ENCODE measurements at regions of chr5 and their contacts with region 1.

Region 1: DNA sequence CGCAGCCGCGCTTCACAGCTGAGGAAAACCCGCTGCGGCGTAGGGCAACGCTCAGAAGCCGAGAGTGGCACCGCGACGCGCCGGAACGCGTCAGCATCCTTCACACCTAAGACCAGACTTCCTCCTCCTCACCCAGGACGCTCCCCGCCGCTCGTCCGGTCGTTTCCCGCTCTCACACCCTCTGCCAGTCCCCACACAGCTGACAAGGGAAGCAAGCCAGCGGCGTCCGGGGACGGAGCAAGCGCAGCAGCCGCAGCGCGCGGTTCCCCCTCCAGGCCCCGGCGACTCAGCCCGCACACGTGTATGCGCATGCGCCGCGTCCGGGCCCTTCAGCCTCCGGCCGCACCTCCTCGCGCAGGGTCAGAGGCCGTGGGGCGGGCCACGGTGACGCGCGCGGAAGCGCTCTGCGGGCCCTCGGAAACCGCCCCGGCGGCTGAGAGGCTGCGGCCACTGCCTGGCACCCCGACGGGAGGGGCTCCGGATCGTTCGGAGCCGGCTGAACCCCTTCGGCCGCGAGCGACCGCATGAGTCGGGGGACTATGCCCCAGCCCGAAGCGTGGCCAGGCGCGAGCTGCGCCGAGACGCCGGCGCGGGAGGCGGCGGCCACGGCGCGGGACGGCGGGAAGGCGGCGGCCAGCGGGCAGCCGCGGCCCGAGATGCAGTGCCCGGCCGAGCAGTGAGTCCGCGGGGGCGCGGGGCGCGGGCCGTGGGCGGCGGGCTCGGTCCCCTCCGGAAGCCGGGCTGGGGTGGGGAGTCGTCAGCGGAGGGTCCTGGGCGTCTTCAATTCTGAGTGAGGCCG is at the start of gene OTULIN:
- DNase-seq: peak; percentile 94
- ATAC-seq: peak; percentile 81
- H3K4me3 ChIP-seq: peak within 1 kb of the TSS; percentile 75 to 91 (median 79)
- H3K4me3 Mint-ChIP-seq: peak within 1 kb of the TSS; percentile 99
- H3K27ac ChIP-seq: peak within 1 kb of the TSS; percentile 67 to 89
- H3K27ac Mint-ChIP-seq: peak within 1 kb of the TSS; percentile 99
- H3K4me1 ChIP-seq: peaks cover 48 to 60% of the 10 kb centered on the region in 2 donors
- H3K4me1 Mint-ChIP-seq: peaks cover 69% of the 10 kb centered on the region
- H3K27me3 ChIP-seq: no peaks in the 10 kb centered on the region
- H3K27me3 Mint-ChIP-seq: no peaks in the 10 kb centered on the region
- CTCF ChIP-seq: no peak
- total RNA-seq, gene OTULIN: 60.6 and 64.4 TPM in 2 replicates

Region 2: DNA sequence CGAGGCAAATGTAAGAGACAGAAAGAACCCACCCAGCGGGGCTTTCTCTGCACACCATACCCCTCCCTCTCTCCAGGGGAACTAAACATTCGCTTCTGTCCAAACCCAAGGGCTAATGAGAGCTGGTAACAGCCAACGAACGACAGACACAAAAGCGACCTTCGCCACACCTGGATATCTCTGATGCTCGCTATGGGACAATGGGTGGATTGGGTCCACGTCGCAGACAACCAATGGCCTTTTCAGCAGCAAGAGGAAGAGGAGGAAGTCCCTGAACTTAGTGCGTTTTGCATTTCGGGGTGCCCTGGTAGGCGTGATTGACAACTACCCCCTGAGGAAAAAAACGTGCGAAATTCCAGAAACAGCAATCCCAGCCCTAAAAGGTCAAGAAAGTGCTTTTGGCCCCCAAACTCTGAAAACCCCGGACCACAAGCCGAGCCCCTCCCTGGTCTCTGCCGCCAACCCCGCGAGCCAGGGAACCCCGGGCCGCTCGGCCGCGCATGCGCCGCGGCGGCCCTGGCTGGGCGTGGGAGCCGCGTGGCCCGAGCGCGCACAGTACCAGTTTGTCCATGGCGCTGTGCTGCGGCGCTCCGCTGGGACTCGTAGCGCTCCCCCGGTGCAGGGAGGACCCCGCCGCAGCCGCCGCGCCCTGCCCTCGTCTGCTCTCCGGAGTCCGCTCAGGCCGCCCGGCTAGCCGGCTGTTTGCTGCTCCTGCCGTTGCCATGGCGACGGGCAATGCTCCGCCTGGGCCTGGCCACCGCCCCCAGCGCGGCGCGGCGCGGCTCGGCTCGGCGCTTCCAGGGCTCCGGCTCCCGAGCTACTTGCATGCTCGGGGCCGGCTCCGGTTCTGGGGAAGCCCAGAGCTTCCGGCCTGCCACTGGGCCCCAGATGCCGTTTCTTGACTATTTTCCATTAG is 653.2 kb before region 1 on chr5:
- CTCF ChIA-PET with region 1: no interaction called
- POLR2A ChIA-PET with region 1: no interaction called
- intact Hi-C with region 1: loop called (anchors 10 kb)
- DNase-seq: peak; percentile 85
- ATAC-seq: peak; percentile 87
- H3K4me3 ChIP-seq: peak overlapping the region; percentile 61 to 81 (median 72)
- H3K4me3 Mint-ChIP-seq: peak overlapping the region; percentile 91
- H3K27ac ChIP-seq: peak overlapping the region in 1 of 2 donors; percentile 14
- H3K27ac Mint-ChIP-seq: peak overlapping the region; percentile 60
- H3K4me1 ChIP-seq: peaks cover 5 to 8% of the 10 kb centered on the region in 2 donors
- H3K4me1 Mint-ChIP-seq: peaks cover 9% of the 10 kb centered on the region
- H3K27me3 ChIP-seq: peaks cover 0 to 16% (median 4%) of the 10 kb centered on the region in 4 experiments
- H3K27me3 Mint-ChIP-seq: peaks cover 28% of the 10 kb centered on the region
- CTCF ChIP-seq: no peak

Region 3: GRCh38 chr5:14240359-14240758 is 424.1 kb before region 1 on chr5:
- CTCF ChIA-PET with region 1: no interaction called
- POLR2A ChIA-PET with region 1: no interaction called
- intact Hi-C with region 1: loop called (anchors 10 kb)
- DNase-seq: no peak
- ATAC-seq: no peak
- H3K4me3 ChIP-seq: no peak overlapping the region
- H3K4me3 Mint-ChIP-seq: peak overlapping the region; percentile 46
- H3K27ac ChIP-seq: peak overlapping the region in 1 of 2 donors; percentile 10
- H3K27ac Mint-ChIP-seq: peak overlapping the region; percentile 50
- H3K4me1 ChIP-seq: peaks cover 13 to 15% of the 10 kb centered on the region in 2 donors
- H3K4me1 Mint-ChIP-seq: peaks cover 76% of the 10 kb centered on the region
- H3K27me3 ChIP-seq: no peaks in the 10 kb centered on the region
- H3K27me3 Mint-ChIP-seq: no peaks in the 10 kb centered on the region
- CTCF ChIP-seq: no peak

Region 4: GRCh38 chr5:14581333-14581890 is 83.1 kb before region 1 on chr5 and contains the start of gene OTULINL:
- CTCF ChIA-PET with region 1: no interaction called
- POLR2A ChIA-PET with region 1: no interaction called
- intact Hi-C with region 1: loop called (anchors 5 kb)
- DNase-seq: peak; percentile 85
- ATAC-seq: peak; percentile 97
- H3K4me3 ChIP-seq: peak within 1 kb of the TSS; percentile 31 to 70 (median 62)
- H3K4me3 Mint-ChIP-seq: peak within 1 kb of the TSS; percentile 74
- H3K27ac ChIP-seq: no peak within 1 kb of the TSS
- H3K27ac Mint-ChIP-seq: no peak within 1 kb of the TSS
- H3K4me1 ChIP-seq: peaks cover 9 to 14% of the 10 kb centered on the region in 2 donors
- H3K4me1 Mint-ChIP-seq: peaks cover 5% of the 10 kb centered on the region
- H3K27me3 ChIP-seq: peaks cover 0 to 44% (median 18%) of the 10 kb centered on the region in 4 experiments
- H3K27me3 Mint-ChIP-seq: peaks cover 39% of the 10 kb centered on the region
- CTCF ChIP-seq: no peak
- total RNA-seq, gene OTULINL: 0.80 and 0.81 TPM in 2 replicates

Region 5: DNA sequence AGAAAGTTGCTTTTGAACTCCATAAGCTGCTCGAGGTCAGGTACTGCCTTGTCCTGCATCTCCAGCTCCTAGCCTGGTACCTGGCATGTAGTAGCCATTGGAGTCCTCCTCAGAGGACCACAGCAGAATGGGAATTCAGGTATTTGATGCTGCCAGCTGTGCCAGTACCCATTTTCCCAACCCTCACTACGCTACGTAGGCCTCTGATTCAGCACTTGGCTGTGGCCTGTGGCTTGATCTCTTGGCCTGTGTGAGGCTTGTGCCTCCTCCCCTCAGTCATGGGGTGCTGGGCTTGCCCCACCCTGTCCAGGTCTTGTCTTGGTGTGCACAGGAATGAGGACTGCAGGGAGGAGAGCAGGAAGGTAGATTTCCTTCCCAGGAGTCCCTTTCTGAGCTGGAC is 11.8 kb after region 1 on chr5:
- CTCF ChIA-PET with region 1: interaction called, 10 read pairs
- POLR2A ChIA-PET with region 1: no interaction called
- intact Hi-C with region 1: loop called (anchors 1 kb)
- DNase-seq: no peak
- ATAC-seq: peak; percentile 53
- H3K4me3 ChIP-seq: peak overlapping the region in 3 of 5 experiments; percentile 35 to 63 (median 37)
- H3K4me3 Mint-ChIP-seq: peak overlapping the region; percentile 77
- H3K27ac ChIP-seq: peak overlapping the region; percentile 0 to 65
- H3K27ac Mint-ChIP-seq: peak overlapping the region; percentile 64
- H3K4me1 ChIP-seq: peaks cover 52 to 68% of the 10 kb centered on the region in 2 donors
- H3K4me1 Mint-ChIP-seq: peaks cover 81% of the 10 kb centered on the region
- H3K27me3 ChIP-seq: no peaks in the 10 kb centered on the region
- H3K27me3 Mint-ChIP-seq: no peaks in the 10 kb centered on the region
- CTCF ChIP-seq: no peak

Region 6: GRCh38 chr5:14809369-14810155 is 145.1 kb after region 1 on chr5:
- CTCF ChIA-PET with region 1: no interaction called
- POLR2A ChIA-PET with region 1: no interaction called
- intact Hi-C with region 1: loop called (anchors 10 kb)
- DNase-seq: peak; percentile 75
- ATAC-seq: peak; percentile 93
- H3K4me3 ChIP-seq: peak overlapping the region in 3 of 5 experiments; percentile 22 to 51 (median 43)
- H3K4me3 Mint-ChIP-seq: peak overlapping the region; percentile 89
- H3K27ac ChIP-seq: peak overlapping the region; percentile 26 to 75
- H3K27ac Mint-ChIP-seq: peak overlapping the region; percentile 94
- H3K4me1 ChIP-seq: peaks cover 31 to 38% of the 10 kb centered on the region in 2 donors
- H3K4me1 Mint-ChIP-seq: peaks cover 43% of the 10 kb centered on the region
- H3K27me3 ChIP-seq: no peaks in the 10 kb centered on the region
- H3K27me3 Mint-ChIP-seq: no peaks in the 10 kb centered on the region
- CTCF ChIP-seq: no peak

Region 7: GRCh38 chr5:14996997-14997396 is 332.5 kb after region 1 on chr5:
- CTCF ChIA-PET with region 1: no interaction called
- POLR2A ChIA-PET with region 1: no interaction called
- intact Hi-C with region 1: loop called (anchors 5 kb)
- DNase-seq: peak; percentile 85
- ATAC-seq: peak; percentile 69
- H3K4me3 ChIP-seq: no peak overlapping the region
- H3K4me3 Mint-ChIP-seq: peak overlapping the region; percentile 24
- H3K27ac ChIP-seq: peak overlapping the region; percentile 37 to 59
- H3K27ac Mint-ChIP-seq: peak overlapping the region; percentile 71
- H3K4me1 ChIP-seq: peaks cover 35 to 39% of the 10 kb centered on the region in 2 donors
- H3K4me1 Mint-ChIP-seq: peaks cover 63% of the 10 kb centered on the region
- H3K27me3 ChIP-seq: no peaks in the 10 kb centered on the region
- H3K27me3 Mint-ChIP-seq: no peaks in the 10 kb centered on the region
- CTCF ChIP-seq: no peak